Aorta (tissue), 5 donors: ENCODE measurements at regions of chr1 and their contacts with region 1.

Region 1: DNA sequence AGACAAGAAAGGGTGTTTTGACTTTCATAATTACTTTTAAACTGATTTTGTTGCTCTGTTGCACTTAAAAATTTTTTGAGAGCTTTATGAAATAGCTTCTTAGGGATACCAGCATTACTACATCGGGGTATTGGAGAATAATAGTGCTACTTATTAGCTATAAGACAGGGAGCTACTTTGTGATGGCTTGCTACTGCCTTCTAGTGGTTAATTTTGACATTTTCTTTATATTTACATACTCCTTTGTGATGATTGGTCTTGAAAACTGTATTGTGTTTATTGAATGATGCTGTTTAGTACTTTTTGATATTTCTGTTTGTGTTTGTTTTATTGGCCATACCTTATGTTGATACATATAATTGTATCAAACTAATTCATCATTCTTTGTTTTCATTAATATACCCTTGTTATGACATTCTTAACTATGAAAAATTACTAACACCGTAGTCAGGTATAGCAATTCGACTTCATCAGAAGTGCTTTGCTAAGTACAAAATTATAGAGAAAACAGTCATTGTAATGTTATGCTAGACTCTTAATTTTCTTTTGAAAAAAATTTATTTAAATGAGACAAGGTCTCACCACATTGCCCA is 85.5 kb downstream of the CLIC4 start:
- DNase-seq: no peak
- ATAC-seq: peak; percentile 76
- H3K4me3 ChIP-seq: no peak overlapping the region
- H3K27ac ChIP-seq: no peak overlapping the region
- H3K4me1 ChIP-seq: peaks cover 3 to 12% of the 10 kb centered on the region in 2 donors
- H3K27me3 ChIP-seq: no peaks in the 10 kb centered on the region

Region 2: DNA sequence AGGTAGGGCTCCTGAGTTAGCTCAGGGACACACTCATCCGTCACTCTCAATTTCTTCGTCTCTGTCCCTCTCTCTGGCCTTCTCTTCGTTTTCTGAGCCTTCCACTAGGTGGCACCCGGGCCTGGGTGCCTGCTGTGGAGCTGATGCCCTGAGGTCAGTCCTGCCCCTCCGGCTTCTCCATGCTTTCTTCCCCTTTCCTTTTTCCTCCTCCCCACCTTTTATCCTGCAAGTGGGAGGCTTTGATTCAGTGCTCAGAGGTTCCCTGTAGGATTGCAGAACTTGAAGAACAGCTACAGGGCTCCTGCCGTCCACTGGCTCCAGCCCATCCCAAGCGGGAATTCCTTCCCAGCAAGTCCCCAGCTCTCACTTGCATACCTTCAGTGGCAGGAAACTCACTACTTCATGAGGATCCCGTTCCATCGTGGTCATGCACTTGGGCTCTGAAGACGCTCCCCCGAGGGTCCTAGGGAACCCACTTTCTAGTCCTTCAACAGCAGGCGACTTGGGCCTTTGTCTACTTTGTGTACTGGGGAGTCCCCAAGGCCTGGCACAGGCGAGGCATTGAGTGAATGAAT is 142.1 kb before region 1 on chr1:
- intact Hi-C with region 1: loop called (anchors 2 kb)
- DNase-seq: peak; percentile 84 to 87
- ATAC-seq: peak; percentile 86
- H3K4me3 ChIP-seq: no peak overlapping the region
- H3K27ac ChIP-seq: no peak overlapping the region
- H3K4me1 ChIP-seq: no peaks in the 10 kb centered on the region
- H3K27me3 ChIP-seq: no peaks in the 10 kb centered on the region